Left cardiac atrium (tissue), 4 donors: ENCODE measurements at regions of chr11 and their contacts with region 1.

Region 1: DNA sequence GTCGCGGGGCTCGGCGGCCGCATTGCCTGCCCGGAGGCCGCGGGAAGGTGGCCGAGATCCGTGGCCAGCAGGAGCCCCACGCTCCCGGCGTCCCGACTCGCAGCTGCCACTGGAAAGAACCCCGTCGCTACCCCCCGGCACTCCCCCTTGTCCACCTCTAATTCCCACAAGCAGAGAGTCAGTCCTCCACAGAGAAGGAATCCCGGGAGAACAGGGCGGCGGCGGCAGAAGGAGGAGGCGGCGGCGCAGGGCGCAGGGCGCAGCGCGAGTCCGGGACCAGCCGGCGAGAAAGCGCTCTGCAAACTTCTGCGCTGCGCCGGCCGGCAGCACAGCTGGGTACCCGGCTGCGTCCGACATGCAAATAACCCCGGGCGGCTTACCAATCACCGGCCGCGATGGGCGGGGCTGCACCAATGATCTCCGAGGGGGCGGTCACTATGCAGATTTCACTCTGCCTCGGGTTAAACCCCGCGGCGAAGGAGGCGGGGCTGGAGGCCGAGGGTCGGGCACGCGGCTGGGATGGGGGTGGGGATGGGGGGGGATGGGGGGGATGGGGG is at the start of gene ABTB2:
- DNase-seq: peak; percentile 98
- ATAC-seq: peak; percentile 93 to 95
- total RNA-seq, gene ABTB2: 12.5 to 19.3 TPM

Region 2: GRCh38 chr11:34174412-34175041 is 183.3 kb before region 1 on chr11:
- intact Hi-C with region 1: loop called (anchors 1 to 5 kb)
- DNase-seq: peak; percentile 88
- ATAC-seq: peak; percentile 98

Region 3: GRCh38 chr11:34243726-34244464 is 113.9 kb before region 1 on chr11:
- intact Hi-C with region 1: loop called in 1 of 2 experiments (anchors 5 kb)
- DNase-seq: peak; percentile 43
- ATAC-seq: peak; percentile 24 to 82

Region 4: DNA sequence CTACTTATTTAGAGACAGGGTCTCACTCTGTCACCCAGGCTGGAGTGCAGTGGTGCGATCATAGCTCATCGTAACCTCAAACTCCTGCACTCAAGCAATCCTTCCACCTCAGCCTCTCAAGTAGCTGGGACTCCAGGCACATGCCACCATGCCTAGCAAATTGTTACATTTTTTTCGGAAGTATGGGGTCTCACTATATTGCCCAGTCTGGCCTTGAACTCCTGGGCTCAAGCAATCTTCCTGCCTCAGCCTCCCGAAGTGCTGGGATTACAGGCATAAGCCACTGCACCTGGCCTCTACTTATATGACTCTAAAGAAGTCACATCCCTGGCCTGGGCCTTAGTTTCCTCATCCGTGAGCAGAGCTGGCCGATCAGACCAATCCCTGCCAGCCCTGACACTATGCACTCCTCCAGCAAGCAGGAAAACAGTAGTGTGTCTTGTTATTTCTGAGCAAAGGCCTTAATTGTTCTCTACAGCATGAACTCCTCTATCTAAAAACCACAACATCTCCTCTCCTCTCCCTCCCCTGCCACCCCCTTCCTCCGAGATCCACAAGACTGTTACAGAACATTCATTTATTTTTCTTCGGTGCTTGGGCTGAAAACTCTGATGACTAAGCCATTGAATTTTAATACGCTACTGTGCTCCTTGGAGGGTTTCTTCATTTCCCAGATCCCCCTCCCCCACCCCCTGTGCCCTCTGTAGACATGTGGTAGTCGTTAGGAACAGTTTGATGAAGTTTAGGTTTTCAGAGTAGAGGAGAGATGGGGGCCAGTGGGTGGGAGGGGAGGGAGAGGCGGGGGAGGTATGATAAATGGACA is 91.5 kb before region 1 on chr11:
- intact Hi-C with region 1: loop called in 1 of 2 experiments (anchors 10 kb)
- DNase-seq: peak; percentile 58
- ATAC-seq: peak; percentile 54 to 79